Gastrocnemius medialis (tissue), 4 donors: ENCODE measurements at regions of chr12 and their contacts with region 1.

Region 1: GRCh38 chr12:118372541-118373495 is at the start of gene TAOK3:
- DNase-seq: peak; percentile 99 to 100
- ATAC-seq: peak; percentile 72 to 83
- H3K4me3 ChIP-seq: peak within 1 kb of the TSS; percentile 67 to 99 (median 96)
- H3K27ac ChIP-seq: peak within 1 kb of the TSS; percentile 91 to 98 (median 96)
- H3K4me1 ChIP-seq: peaks cover 42 to 55% of the 10 kb centered on the region in 2 donors
- H3K27me3 ChIP-seq: no peaks in the 10 kb centered on the region
- CTCF ChIP-seq: no peak
- POLR2A ChIP-seq: peak; percentile 94 to 95
- total RNA-seq, gene TAOK3: 13.5 to 24.5 (median 15.1) TPM

Region 2: GRCh38 chr12:116737774-116738700 is 1634.8 kb before region 1 on chr12 and contains the starts of genes RNFT2 and SPRING1:
- in situ Hi-C with region 1: no loop called
- intact Hi-C with region 1: loop called (anchors 10 kb)
- DNase-seq: peak; percentile 99
- ATAC-seq: peak; percentile 100
- H3K4me3 ChIP-seq: peak within 1 kb of the TSS; percentile 60 to 92 (median 80)
- H3K27ac ChIP-seq: peak within 1 kb of the TSS; percentile 56 to 84 (median 76)
- H3K4me1 ChIP-seq: peaks cover 11 to 18% of the 10 kb centered on the region in 2 donors
- H3K27me3 ChIP-seq: no peaks in the 10 kb centered on the region
- CTCF ChIP-seq: peak in 1 of 5 experiments; percentile 22
- POLR2A ChIP-seq: peak; percentile 96 to 97
- total RNA-seq, gene RNFT2: 0.55 TPM in 1 of 4 donors, not detected in the others
- total RNA-seq, gene SPRING1: 3.5 to 11.0 (median 8.2) TPM

Region 3: DNA sequence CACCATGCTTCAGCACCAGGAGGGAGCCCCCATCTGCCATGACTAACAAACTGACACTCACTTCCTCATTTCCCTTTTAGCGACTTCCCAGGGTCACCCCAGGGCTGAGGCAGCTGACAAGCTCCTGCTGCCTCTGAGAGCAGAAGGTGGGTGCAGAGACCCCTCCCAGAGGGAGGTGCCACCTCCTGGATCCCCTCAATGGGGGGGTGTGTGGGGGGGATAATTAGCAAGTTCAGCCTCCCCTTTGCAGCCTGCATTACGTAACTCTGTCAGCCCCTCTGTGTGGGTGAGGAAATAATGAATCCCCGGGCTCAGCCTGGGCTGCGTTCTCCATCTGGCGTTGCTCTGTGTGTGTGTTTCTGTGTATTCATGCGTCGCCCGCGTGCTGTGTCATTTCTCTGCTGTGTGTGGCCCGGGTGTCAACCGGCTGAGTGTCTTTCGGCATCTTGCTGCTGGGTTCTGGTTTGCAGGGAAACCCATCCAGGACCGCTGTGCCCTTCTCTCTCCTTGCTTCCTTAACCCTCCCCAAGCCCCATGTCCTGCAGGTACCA is 1039.4 kb before region 1 on chr12:
- in situ Hi-C with region 1: no loop called
- intact Hi-C with region 1: no loop called
- DNase-seq: no peak
- ATAC-seq: no peak
- H3K4me3 ChIP-seq: no peak overlapping the region
- H3K27ac ChIP-seq: no peak overlapping the region
- H3K4me1 ChIP-seq: peaks cover 15 to 19% of the 10 kb centered on the region in 2 donors
- H3K27me3 ChIP-seq: no peaks in the 10 kb centered on the region
- CTCF ChIP-seq: no peak
- POLR2A ChIP-seq: no peak

Region 4: GRCh38 chr12:118103604-118104382 is 269.0 kb before region 1 on chr12 and contains the start of gene VSIG10:
- in situ Hi-C with region 1: no loop called
- intact Hi-C with region 1: loop called (anchors 5 kb)
- DNase-seq: peak; percentile 74 to 80
- ATAC-seq: peak; percentile 93
- H3K4me3 ChIP-seq: peak within 1 kb of the TSS; percentile 70 to 93 (median 92)
- H3K27ac ChIP-seq: peak within 1 kb of the TSS; percentile 81 to 97 (median 95)
- H3K4me1 ChIP-seq: peaks cover 14 to 24% of the 10 kb centered on the region in 2 donors
- H3K27me3 ChIP-seq: no peaks in the 10 kb centered on the region
- CTCF ChIP-seq: no peak
- POLR2A ChIP-seq: peak; percentile 49 to 71
- total RNA-seq, gene VSIG10: 9.3 to 22.1 (median 17.0) TPM

Region 5: GRCh38 chr12:118135788-118136558 is 236.8 kb before region 1 on chr12 and contains the start of gene PEBP1:
- in situ Hi-C with region 1: no loop called
- intact Hi-C with region 1: loop called (anchors 5 kb)
- DNase-seq: peak; percentile 94 to 95
- ATAC-seq: peak; percentile 81 to 91
- H3K4me3 ChIP-seq: peak within 1 kb of the TSS; percentile 75 to 94 (median 92)
- H3K27ac ChIP-seq: peak within 1 kb of the TSS; percentile 91 to 97 (median 96)
- H3K4me1 ChIP-seq: peaks cover 14 to 37% of the 10 kb centered on the region in 2 donors
- H3K27me3 ChIP-seq: no peaks in the 10 kb centered on the region
- CTCF ChIP-seq: peak in 1 of 5 experiments; percentile 27
- POLR2A ChIP-seq: peak; percentile 92 to 93
- total RNA-seq, gene PEBP1: 306 to 442 (median 330) TPM

Region 6: DNA sequence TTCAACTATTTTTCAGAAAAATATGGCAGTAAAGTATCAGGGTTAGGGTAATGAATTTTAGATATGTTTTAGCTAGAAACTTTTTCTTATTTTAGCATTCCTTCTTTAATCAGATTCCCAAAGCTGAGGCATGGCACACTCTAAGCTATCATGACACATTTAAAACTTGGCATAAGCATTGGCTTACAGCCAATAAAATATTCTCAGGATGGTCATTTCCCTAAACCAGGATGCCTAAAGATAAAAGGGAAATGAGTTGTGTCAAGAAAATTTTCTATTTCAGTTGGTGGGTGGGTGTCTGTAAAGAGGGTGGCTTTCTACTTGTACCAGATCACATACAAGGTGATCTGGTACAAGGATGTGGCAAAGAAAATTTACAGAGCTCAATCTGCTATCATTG is 189.1 kb before region 1 on chr12:
- in situ Hi-C with region 1: loop called in 3 of 4 experiments (anchors 5 to 10 kb)
- intact Hi-C with region 1: loop called (anchors 1 kb)
- DNase-seq: no peak
- ATAC-seq: no peak
- H3K4me3 ChIP-seq: no peak overlapping the region
- H3K27ac ChIP-seq: peak overlapping the region; percentile 1 to 64 (median 41)
- H3K4me1 ChIP-seq: peaks cover 18 to 32% of the 10 kb centered on the region in 2 donors
- H3K27me3 ChIP-seq: no peaks in the 10 kb centered on the region
- CTCF ChIP-seq: no peak
- POLR2A ChIP-seq: no peak

Region 7: DNA sequence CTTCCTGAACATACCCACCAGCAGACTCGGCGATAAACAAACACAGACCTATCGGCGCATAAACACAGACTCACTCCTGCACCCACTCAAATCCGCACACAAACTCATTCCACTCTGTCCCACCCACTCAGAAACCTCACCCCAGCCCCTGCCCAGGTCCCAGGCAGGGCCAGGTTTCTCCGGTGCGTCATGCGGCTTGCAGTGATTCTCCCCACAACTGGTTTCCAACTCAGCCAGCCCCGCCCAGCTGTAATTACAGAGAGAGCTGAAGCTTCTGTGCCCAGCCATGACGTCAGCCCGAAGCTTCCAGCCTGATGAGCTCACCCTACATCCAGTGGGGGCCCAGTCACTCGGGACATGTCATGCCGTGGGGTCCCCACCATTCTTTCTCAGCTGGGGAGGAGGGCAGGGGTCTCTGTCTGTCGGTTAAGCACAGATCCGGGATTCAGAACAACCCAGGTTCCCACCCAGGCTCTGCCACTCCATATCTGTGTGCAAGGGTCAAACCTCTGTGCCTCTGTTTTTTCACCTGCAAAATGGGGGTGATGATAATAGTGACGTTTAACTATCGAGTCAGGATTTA is 803.5 kb after region 1 on chr12:
- in situ Hi-C with region 1: no loop called
- intact Hi-C with region 1: loop called (anchors 10 kb)
- DNase-seq: peak; percentile 95 to 98
- ATAC-seq: peak; percentile 57 to 64
- H3K4me3 ChIP-seq: peak overlapping the region; percentile 24 to 61 (median 44)
- H3K27ac ChIP-seq: peak overlapping the region; percentile 97 to 100 (median 98)
- H3K4me1 ChIP-seq: peaks cover 27 to 29% of the 10 kb centered on the region in 2 donors
- H3K27me3 ChIP-seq: no peaks in the 10 kb centered on the region
- CTCF ChIP-seq: no peak
- POLR2A ChIP-seq: peak; percentile 81 to 83